Lower leg skin (tissue), 4 donors: ENCODE measurements at regions of chr17 and their contacts with region 1.

Region 1: DNA sequence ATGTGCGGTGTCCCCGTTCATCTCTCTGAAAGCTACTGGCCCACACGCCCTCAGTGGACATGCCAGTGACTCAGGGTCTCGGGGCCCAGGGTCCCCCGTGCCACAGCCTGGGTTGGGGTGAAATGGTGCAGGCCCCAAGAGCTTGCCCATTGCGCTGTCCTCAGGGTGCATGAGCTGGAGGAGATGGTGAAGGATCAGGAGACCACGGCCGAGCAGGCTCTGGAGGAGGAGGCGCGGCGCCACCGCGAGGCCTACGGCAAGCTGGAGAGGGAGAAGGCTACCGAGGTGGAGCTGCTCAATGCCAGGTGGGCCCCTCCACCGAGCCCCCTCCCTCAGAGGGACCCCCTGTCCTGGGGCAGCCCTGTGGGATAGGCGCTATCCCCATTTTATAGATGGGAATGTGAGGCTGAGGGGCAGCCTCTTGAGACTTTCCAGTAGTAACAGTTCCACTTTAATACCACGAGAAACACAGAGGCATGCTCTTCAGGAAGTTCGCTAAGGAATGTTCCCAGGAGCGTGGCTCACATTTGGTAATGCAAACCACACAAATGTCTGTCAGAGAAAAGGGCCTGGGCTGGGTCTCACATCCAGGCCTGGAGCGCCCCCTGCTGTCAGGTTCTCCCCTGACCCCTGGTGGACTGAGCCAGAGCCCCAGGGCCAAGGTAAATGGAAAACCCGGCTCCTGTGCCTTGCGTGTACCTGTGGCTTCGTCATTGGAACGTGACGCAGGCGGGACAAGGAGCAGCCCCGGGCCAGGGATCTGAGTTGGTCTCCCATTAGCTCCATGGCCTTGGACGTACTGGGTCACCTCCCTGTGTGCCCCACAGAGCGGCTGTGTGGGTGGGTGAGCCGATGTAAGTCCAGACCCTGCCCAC is 133.7 kb downstream of the RAB11FIP4 start:
- DNase-seq: peak; percentile 69 to 96
- H3K4me3 ChIP-seq: no peak overlapping the region
- CTCF ChIP-seq: peak in 1 of 3 donors; percentile 51
- POLR2A ChIP-seq: no peak

Region 2: DNA sequence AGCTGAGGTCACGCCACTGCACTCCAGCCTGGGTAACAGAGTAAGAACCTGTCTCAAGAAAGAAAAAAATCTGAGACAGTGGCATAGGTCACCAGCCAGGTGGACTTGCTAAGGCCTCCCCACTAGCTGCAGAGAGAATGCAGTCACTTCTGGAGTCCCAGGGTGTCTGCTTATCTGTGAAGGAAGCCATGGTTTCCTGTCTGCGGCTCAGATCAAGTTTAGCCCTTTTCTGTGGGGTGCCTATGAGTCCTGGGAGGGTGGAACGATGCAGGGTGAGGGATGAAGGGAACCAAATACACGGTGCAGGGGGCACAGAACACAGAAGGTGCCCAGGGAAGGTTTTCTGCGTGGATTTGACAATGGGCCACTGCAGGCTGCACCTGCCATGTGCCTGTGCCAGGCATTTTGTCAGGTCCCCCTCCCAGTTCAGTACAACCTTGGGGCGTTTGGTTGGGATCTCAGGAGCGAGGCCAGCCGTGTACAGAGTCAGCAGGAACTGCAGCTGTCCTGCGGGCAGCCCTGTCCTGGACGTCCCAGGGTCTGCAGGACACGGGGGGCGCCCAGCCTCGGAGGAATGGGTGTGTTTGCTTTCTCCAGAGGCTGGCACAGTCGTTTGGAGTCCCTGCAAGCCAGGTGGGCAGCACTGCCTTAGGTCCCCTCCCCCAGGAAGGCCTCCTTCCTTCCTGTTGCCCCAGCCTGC is 91.9 kb before region 1 on chr17:
- intact Hi-C with region 1: loop called (anchors 2 kb)
- DNase-seq: no peak
- H3K4me3 ChIP-seq: no peak overlapping the region
- CTCF ChIP-seq: no peak
- POLR2A ChIP-seq: no peak

Region 3: GRCh38 chr17:31596382-31597323 is 71.5 kb after region 1 on chr17:
- intact Hi-C with region 1: no loop called
- DNase-seq: peak; percentile 75 to 93
- H3K4me3 ChIP-seq: no peak overlapping the region
- CTCF ChIP-seq: no peak
- POLR2A ChIP-seq: no peak

Region 4: DNA sequence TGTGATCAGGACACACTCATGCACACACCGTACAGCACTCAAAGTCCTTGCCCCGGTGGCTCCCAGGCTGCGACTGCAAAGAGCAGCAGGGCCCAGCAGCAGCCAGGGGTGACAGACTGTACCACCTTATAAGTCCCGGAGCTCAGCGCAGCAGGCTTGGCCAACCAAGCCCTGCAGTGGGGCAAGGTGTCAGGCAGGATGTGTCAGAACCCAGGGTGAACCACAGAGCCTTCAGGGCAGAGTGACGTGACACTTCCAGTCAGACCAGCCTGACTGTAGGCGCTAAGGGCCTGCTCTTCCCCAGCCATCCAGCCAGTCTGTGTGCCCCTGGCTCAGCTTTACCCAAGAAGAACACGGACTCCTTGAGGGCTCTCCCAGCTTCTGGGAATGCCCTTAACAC is 129.8 kb after region 1 on chr17:
- intact Hi-C with region 1: no loop called
- DNase-seq: peak in 1 of 2 donors; percentile 58
- H3K4me3 ChIP-seq: no peak overlapping the region
- CTCF ChIP-seq: no peak
- POLR2A ChIP-seq: no peak